ENCODE measurements at regions of chr22 and their contacts with region 1.

Region 1: DNA sequence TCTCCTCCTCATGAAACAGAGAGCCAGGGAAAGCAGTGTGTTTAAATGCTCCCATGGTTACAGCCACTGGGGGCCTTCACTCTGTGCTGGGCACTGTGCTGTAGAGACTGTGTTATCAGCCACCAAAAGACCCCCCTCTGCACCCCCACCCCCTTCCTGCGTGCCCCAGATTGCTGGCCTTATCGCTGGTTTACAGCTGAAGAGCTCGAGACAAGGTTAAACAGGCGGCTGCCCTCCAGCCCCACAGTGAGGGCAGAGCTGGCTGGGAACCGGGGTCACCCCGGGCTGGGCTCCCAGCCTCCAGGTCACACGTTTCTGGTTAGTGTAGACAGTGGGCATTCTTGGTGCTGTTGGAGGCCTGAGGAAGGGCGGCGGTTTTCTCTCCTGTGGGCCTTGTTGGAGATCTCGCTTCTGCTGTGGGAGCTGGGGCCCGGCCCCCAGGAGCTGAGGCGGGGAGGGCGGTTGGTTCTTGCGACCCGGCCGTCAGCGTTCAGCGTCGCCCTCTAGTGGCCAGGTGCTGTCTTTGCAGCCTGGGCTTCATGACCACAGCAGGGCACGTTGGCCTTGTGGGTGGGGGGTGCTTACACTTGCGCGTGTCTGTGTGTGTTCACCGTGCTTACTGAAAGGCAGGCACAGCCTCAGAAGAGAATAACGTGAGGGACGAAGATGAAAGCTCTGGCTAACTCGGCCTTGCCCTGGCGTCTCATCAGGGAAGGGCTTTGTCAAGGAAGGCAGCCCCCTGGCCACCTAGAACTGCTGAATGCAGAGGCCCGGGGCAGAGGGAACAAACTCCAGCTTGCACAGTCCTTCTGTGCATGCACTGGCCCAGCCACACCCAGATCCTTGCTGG is 40.8 kb downstream of the TBC1D22A start:
- DNase-seq: peak; percentile 71 to 84 (median 73)
- H3K4me3 ChIP-seq: peak overlapping the region in 3 of 7 experiments; percentile 20 to 30 (median 20)
- H3K27ac ChIP-seq: peak overlapping the region in 1 of 2 experiments; percentile 15
- H3K4me1 ChIP-seq: peaks cover 0 to 26% (median 14%) of the 10 kb centered on the region in 4 experiments
- H3K27me3 ChIP-seq: no peaks in the 10 kb centered on the region

Region 2: GRCh38 chr22:46737976-46738646 is 65.1 kb before region 1 on chr22 and contains the start of gene CERK:
- CTCF ChIA-PET with region 1: interaction called, 16 read pairs
- POLR2A ChIA-PET with region 1: interaction called, 3 read pairs
- DNase-seq: peak; percentile 54 to 72 (median 58)
- H3K4me3 ChIP-seq: peak within 1 kb of the TSS; percentile 68 to 91 (median 78)
- H3K27ac ChIP-seq: peak within 1 kb of the TSS; percentile 46 to 76
- H3K4me1 ChIP-seq: peaks cover 12 to 45% (median 41%) of the 10 kb centered on the region in 4 experiments
- H3K27me3 ChIP-seq: no peaks in the 10 kb centered on the region

Region 3: GRCh38 chr22:46748908-46749675 is 54.2 kb before region 1 on chr22:
- CTCF ChIA-PET with region 1: interaction called, 10 read pairs
- POLR2A ChIA-PET with region 1: no interaction called
- DNase-seq: peak; percentile 70 to 98 (median 97)
- H3K4me3 ChIP-seq: peak overlapping the region in 3 of 7 experiments; percentile 6 to 62 (median 13)
- H3K27ac ChIP-seq: peak overlapping the region; percentile 59 to 76
- H3K4me1 ChIP-seq: peaks cover 8 to 58% (median 44%) of the 10 kb centered on the region in 4 experiments
- H3K27me3 ChIP-seq: no peaks in the 10 kb centered on the region

Region 4: GRCh38 chr22:46762238-46763050 is 40.8 kb before region 1 on chr22 and contains the start of gene TBC1D22A:
- CTCF ChIA-PET with region 1: interaction called, 72 read pairs
- POLR2A ChIA-PET with region 1: interaction called, 4 read pairs
- DNase-seq: peak; percentile 93 to 96 (median 95)
- H3K4me3 ChIP-seq: peak within 1 kb of the TSS; percentile 71 to 98 (median 94)
- H3K27ac ChIP-seq: peak within 1 kb of the TSS; percentile 92 to 96
- H3K4me1 ChIP-seq: peaks cover 8 to 43% (median 36%) of the 10 kb centered on the region in 4 experiments
- H3K27me3 ChIP-seq: no peaks in the 10 kb centered on the region

Region 5: GRCh38 chr22:46780453-46780852 is 22.8 kb before region 1 on chr22:
- CTCF ChIA-PET with region 1: interaction called, 14 read pairs
- POLR2A ChIA-PET with region 1: no interaction called
- DNase-seq: no peak
- H3K4me3 ChIP-seq: no peak overlapping the region
- H3K27ac ChIP-seq: no peak overlapping the region
- H3K4me1 ChIP-seq: peaks cover 5 to 26% (median 25%) of the 10 kb centered on the region in 4 experiments
- H3K27me3 ChIP-seq: no peaks in the 10 kb centered on the region

Region 6: GRCh38 chr22:46791201-46791731 is 12.0 kb before region 1 on chr22:
- CTCF ChIA-PET with region 1: interaction called, 21 read pairs
- POLR2A ChIA-PET with region 1: no interaction called
- DNase-seq: peak; percentile 46 to 75 (median 70)
- H3K4me3 ChIP-seq: peak overlapping the region in 1 of 7 experiments; percentile 45
- H3K27ac ChIP-seq: peak overlapping the region in 1 of 2 experiments; percentile 49
- H3K4me1 ChIP-seq: peaks cover 8 to 22% (median 14%) of the 10 kb centered on the region in 4 experiments
- H3K27me3 ChIP-seq: no peaks in the 10 kb centered on the region